Ascending aorta (tissue), 2 donors: ENCODE measurements at regions of chr2 and their contacts with region 1.

Region 1: GRCh38 chr2:164479460-164479859 is 141.8 kb downstream of the GRB14 start:
- DNase-seq: no peak
- H3K4me3 ChIP-seq: no peak overlapping the region
- H3K27ac ChIP-seq: no peak overlapping the region
- H3K4me1 ChIP-seq: no peaks in the 10 kb centered on the region
- H3K27me3 ChIP-seq: no peaks in the 10 kb centered on the region
- CTCF ChIP-seq: peak in 2 of 3 experiments; percentile 15 to 42

Region 2: DNA sequence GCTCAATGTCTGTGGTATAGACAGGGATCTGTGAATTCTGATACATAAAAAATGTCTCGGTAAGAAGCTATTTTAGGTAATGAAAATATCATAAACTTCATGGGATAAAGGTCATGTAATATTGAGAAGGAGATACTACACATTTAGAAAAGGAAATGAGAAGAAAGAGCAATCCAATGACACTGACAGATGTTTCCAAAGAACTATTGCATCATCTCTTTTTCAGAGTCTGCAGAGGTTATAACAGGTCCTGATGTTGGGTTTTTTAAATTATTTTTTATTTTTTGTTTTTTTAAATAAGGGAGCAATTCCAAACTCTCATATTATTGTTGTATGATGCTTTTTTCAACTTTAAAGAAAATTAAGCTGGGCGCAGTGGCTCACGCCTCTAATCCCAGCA is 1817.8 kb before region 1 on chr2:
- intact Hi-C with region 1: no loop called
- DNase-seq: no peak
- H3K4me3 ChIP-seq: no peak overlapping the region
- H3K27ac ChIP-seq: no peak overlapping the region
- H3K4me1 ChIP-seq: no peaks in the 10 kb centered on the region
- H3K27me3 ChIP-seq: no peaks in the 10 kb centered on the region
- CTCF ChIP-seq: no peak

Region 3: GRCh38 chr2:163182764-163183354 is 1296.6 kb before region 1 on chr2:
- intact Hi-C with region 1: loop called (anchors 2 kb)
- DNase-seq: no peak
- H3K4me3 ChIP-seq: no peak overlapping the region
- H3K27ac ChIP-seq: no peak overlapping the region
- H3K4me1 ChIP-seq: no peaks in the 10 kb centered on the region
- H3K27me3 ChIP-seq: no peaks in the 10 kb centered on the region
- CTCF ChIP-seq: peak in 2 of 3 experiments; percentile 36 to 49